ENCODE measurements at regions of chr15 and their contacts with region 1.

Region 1: GRCh38 chr15:85625856-85626255 is 168.9 kb downstream of the KLHL25 start:
- DNase-seq: no peak
- H3K4me3 ChIP-seq: peak overlapping the region; percentile 1
- H3K27ac ChIP-seq: peak overlapping the region; percentile 83
- H3K4me1 ChIP-seq: peaks cover 97% of the 10 kb centered on the region
- H3K27me3 ChIP-seq: no peaks in the 10 kb centered on the region
- CTCF ChIP-seq: no peak

Region 2: GRCh38 chr15:85504749-85505676 is 120.8 kb before region 1 on chr15:
- intact Hi-C with region 1: no loop called
- DNase-seq: no peak
- H3K4me3 ChIP-seq: peak overlapping the region; percentile 4
- H3K27ac ChIP-seq: peak overlapping the region; percentile 80
- H3K4me1 ChIP-seq: peaks cover 99% of the 10 kb centered on the region
- H3K27me3 ChIP-seq: no peaks in the 10 kb centered on the region
- CTCF ChIP-seq: peak; percentile 71

Region 3: GRCh38 chr15:85689729-85690128 is 63.9 kb after region 1 on chr15:
- intact Hi-C with region 1: loop called (anchors 2 kb)
- DNase-seq: no peak
- H3K4me3 ChIP-seq: peak overlapping the region; percentile 49
- H3K27ac ChIP-seq: peak overlapping the region; percentile 77
- H3K4me1 ChIP-seq: peaks cover 97% of the 10 kb centered on the region
- H3K27me3 ChIP-seq: no peaks in the 10 kb centered on the region
- CTCF ChIP-seq: no peak